Aorta (tissue), 5 donors: ENCODE measurements at regions of chr2 and their contacts with region 1.

Region 1: GRCh38 chr2:44244129-44244871 is 31.0 kb upstream of the SLC3A1 start:
- DNase-seq: peak in 1 of 2 donors; percentile 59
- ATAC-seq: peak; percentile 89
- H3K4me3 ChIP-seq: peak overlapping the region; percentile 64 to 99
- H3K27ac ChIP-seq: no peak overlapping the region
- H3K4me1 ChIP-seq: no peaks in the 10 kb centered on the region
- H3K27me3 ChIP-seq: no peaks in the 10 kb centered on the region

Region 2: DNA sequence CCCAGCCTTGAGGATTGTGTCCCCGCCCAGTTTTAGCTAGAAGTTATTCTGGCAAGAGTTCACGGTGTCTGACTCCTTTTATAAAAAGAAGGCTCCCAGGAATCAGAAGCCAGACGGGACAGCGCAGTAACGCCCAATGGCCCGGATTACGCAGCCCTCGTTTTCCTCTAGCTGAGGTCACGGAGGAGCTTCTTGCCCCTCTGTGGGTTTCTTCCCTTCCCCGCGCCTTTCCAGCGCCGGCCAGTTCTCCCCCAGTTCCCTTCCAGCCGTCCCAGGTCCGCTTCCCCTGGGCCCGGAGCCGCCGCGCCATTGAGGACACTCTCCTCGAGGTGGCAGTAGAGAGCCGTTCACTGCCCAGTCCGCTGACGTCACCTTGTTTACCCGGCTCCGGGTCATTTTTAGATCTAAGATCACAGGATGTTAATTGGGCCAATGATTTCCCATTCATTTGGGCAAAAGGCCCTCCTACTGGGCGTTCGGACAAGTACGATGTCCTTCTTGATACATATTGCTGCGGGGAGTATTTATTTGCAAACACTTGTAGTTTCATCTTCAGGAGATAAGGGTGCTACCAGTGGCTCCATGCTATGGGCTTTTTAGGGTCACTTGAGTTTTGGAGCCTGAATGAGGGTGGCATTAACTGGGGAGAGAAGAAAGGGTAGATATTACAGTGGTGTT is 157.1 kb before region 1 on chr2:
- intact Hi-C with region 1: loop called (anchors 5 kb)
- DNase-seq: peak; percentile 91 to 95
- ATAC-seq: peak; percentile 98
- H3K4me3 ChIP-seq: peak overlapping the region in 1 of 2 donors; percentile 42
- H3K27ac ChIP-seq: peak overlapping the region; percentile 4 to 17
- H3K4me1 ChIP-seq: no peaks in the 10 kb centered on the region
- H3K27me3 ChIP-seq: no peaks in the 10 kb centered on the region

Region 3: DNA sequence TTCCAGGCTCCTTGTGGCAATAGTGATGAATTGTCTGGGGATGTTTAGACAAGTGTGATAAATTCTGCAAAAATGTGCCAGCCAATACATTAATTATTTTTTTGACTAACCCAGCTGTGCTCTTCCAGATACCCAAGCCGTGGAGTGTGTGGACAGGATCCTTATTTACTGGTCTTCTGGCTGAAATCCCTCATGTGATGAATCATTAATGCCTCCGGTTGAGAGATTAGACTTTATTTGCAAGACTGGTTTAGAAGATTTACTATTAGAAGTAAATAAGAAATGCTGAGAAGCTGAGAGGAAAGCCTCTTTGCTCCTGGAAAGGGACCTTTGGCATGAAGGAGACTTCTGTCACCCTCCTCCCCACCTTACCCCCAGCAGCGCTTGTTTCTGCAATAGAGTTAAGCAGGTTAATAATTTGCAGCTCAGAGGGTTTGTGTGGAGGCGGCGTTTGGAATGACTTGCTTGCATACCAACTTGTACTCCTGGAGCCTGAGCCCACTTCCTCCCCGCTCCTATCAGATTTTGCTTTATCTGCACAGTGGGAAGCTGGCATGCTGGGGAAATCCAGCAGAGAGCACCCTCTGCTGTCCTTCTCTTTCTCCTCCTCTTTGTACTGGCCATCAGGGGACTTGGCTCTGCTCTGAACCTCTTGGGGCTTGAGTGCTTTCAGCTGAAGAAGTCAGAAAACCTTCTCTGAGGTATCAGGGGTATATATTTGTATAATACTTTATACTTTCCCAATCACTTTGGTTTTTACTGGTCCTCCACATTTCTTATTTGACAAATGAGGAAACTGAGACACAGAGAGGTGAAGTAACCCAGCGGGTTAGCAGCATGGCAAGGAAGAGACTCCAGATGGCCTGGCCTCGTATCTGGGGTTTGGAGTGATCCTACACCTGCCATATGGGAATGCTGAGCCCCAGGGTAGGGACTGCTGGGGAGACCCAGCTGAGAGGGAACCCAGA is 47.3 kb after region 1 on chr2:
- intact Hi-C with region 1: loop called (anchors 1 to 5 kb)
- DNase-seq: peak in 1 of 2 donors; percentile 60
- ATAC-seq: peak; percentile 88
- H3K4me3 ChIP-seq: no peak overlapping the region
- H3K27ac ChIP-seq: peak overlapping the region in 1 of 2 donors; percentile 21
- H3K4me1 ChIP-seq: peaks cover 0 to 6% of the 10 kb centered on the region in 2 donors
- H3K27me3 ChIP-seq: no peaks in the 10 kb centered on the region

Region 4: GRCh38 chr2:44348400-44348799 is 104.1 kb after region 1 on chr2:
- intact Hi-C with region 1: loop called in 1 of 2 experiments (anchors 5 kb)
- DNase-seq: no peak
- ATAC-seq: peak; percentile 81
- H3K4me3 ChIP-seq: peak overlapping the region in 1 of 2 donors; percentile 18
- H3K27ac ChIP-seq: peak overlapping the region in 1 of 2 donors; percentile 96
- H3K4me1 ChIP-seq: peaks cover 4 to 7% of the 10 kb centered on the region in 2 donors
- H3K27me3 ChIP-seq: no peaks in the 10 kb centered on the region

Region 5: DNA sequence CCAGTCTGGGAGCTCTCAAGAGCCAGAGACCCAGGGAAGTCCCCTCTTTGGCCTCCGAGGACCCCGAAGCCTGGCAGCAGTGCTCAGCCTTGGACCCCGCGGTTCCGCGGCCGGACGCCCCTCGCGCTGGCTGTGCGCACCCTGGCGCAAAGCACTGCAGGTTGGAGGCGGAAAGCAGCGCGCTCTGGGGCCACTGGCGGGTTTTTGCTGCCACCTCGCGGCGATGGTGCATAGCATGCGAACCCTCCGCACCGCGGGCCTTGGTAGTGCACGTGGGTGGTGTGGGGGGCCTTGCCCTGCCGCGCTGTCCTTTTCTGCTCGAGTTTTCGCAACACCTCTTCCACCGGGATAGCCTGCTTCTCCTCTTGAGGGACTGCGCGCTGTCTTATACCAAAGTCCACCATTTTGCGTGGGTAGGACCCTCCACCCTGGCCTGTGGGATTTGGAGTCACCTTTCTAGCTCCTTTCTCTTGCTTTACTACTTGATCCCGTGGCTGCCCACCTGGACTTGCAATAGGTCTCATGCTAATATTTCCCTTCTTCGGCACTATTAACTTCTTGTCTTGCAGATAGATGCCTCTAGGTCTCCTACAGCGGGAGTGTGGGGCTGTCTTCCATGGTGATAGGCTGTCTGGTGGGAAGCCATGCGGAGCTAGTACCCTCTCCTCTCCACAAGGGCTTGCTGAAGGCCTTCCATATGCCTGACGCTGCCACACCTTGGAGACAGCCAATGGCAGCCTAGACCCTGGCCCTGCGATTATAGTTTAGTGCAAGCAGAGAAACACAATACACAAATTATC is 711.5 kb after region 1 on chr2:
- intact Hi-C with region 1: loop called in 1 of 2 experiments (anchors 10 kb)
- DNase-seq: peak; percentile 77 to 93
- ATAC-seq: peak; percentile 89
- H3K4me3 ChIP-seq: no peak overlapping the region
- H3K27ac ChIP-seq: no peak overlapping the region
- H3K4me1 ChIP-seq: no peaks in the 10 kb centered on the region
- H3K27me3 ChIP-seq: no peaks in the 10 kb centered on the region